RWPE1 (cell line): ENCODE measurements at regions of chr17 and their contacts with region 1.

Region 1: DNA sequence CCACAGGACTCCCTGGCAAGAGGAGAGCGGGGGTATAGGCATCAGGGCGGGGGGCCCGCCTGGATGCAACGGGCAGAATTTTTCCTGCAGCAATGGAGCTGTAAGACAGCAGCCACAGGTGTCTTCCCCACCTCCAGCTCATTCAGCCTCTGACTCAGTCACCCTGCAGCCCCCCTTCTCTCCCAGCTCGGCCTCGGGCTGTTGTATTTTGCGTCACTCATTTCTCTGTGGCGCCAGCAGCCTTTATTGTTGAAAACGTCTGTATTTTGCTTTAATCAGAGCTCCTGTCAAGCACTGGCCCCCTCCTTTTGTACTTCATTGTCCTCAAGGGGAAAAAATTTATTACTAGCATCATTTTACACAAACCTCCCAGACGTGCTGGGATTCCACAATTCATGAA is 117.7 kb downstream of the WSCD1 start:
- DNase-seq: peak; percentile 32
- H3K27ac ChIP-seq: no peak overlapping the region
- CTCF ChIP-seq: no peak

Region 2: GRCh38 chr17:6027342-6028024 is 160.4 kb before region 1 on chr17:
- CTCF ChIA-PET with region 1: interaction called, 11 read pairs
- POLR2A ChIA-PET with region 1: no interaction called
- DNase-seq: no peak
- H3K27ac ChIP-seq: no peak overlapping the region
- CTCF ChIP-seq: no peak

Region 3: GRCh38 chr17:6255322-6255721 is 67.5 kb after region 1 on chr17:
- CTCF ChIA-PET with region 1: interaction called, 11 read pairs
- POLR2A ChIA-PET with region 1: no interaction called
- DNase-seq: no peak
- H3K27ac ChIP-seq: no peak overlapping the region
- CTCF ChIP-seq: no peak